AG04449 (cell line): ENCODE measurements at regions of chr5 and their contacts with region 1.

Region 1: GRCh38 chr5:180315762-180316212 is 23.9 kb upstream of the MAPK9 start:
- DNase-seq: no peak
- H3K4me3 ChIP-seq: no peak overlapping the region
- CTCF ChIP-seq: peak; percentile 97

Region 2: DNA sequence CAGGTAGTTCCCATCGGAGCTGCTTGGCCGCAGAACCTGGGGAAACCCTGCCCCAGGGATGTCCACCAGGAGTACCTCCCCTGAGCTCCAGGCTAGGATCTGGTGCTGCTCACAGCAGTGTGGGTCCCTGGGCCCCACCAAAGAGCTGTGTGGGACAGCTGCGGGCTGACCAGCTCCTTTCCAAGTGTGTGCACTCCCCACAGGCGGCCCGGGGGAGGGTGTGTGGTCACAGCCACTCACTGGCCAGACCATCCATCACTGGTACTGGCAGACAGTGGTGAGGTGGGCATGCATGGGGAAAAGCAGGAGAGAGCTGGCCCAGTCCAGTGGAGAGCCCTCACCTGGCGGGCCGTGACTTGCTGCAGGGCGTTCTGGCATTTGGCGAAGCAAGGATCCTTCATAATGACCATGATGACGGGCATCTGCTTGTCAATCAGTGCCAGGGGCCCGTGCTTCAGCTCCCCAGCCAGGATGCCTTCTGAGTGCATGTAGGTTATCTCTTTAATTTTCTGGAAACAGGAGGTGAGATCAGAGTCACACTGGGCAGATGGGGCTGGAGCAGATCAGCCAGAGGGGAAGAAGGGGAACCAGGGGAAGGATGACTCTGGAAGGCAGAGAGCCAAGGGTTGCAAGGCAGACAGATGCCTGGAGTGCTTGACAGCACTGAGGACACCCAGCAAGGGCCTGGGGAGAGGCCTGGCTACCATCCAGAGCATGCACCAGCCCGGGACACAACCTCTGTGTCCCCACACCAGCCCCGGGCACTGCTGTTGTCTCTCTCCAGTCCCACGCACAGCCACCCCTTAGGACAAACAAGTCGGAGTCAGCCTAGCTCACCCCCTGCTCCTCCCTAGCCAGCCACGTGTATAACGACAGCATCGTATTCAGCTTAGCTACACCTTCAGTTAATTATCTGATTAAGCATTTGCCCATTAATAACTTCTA is 11.1 kb before region 1 on chr5:
- CTCF ChIA-PET with region 1: interaction called, 70 read pairs
- POLR2A ChIA-PET with region 1: no interaction called
- DNase-seq: no peak
- H3K4me3 ChIP-seq: no peak overlapping the region
- CTCF ChIP-seq: no peak

Region 3: GRCh38 chr5:180333661-180334060 is 17.9 kb after region 1 on chr5:
- CTCF ChIA-PET with region 1: interaction called, 182 read pairs
- POLR2A ChIA-PET with region 1: no interaction called
- DNase-seq: no peak
- H3K4me3 ChIP-seq: no peak overlapping the region
- CTCF ChIP-seq: no peak

Region 4: GRCh38 chr5:180343831-180344327 is 28.1 kb after region 1 on chr5:
- CTCF ChIA-PET with region 1: interaction called, 33 read pairs
- POLR2A ChIA-PET with region 1: no interaction called
- DNase-seq: no peak
- H3K4me3 ChIP-seq: no peak overlapping the region
- CTCF ChIP-seq: no peak

Region 5: DNA sequence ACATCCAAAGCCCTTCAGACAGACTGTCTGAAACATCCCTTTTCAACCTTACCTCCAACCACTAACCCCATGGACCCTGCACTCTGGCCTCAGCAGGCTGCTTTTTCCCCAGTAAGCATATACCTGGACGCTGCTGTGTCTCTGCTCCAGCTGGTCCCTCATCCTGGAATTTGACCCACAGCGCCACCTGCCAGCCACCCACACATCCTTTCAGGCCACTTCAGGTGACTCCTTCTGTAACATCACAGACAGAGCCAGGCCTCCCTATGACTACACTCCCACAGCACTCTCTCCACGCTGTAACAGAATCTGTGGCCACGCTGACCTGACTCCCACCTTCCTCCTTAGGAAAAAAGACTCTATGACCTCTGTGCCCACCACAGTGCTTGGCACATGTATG is 483.4 kb after region 1 on chr5:
- CTCF ChIA-PET with region 1: no interaction called
- POLR2A ChIA-PET with region 1: no interaction called
- DNase-seq: no peak
- H3K4me3 ChIP-seq: no peak overlapping the region
- CTCF ChIP-seq: no peak